Mucosa of descending colon (tissue), 3 donors: ENCODE measurements at regions of chr18 and their contacts with region 1.

Region 1: GRCh38 chr18:74652392-74652988 is 54.8 kb downstream of the ZNF407 start:
- DNase-seq: peak in 1 of 3 donors; percentile 18
- ATAC-seq: no peak
- H3K4me3 ChIP-seq: no peak overlapping the region
- H3K4me1 ChIP-seq: no peaks in the 10 kb centered on the region
- CTCF ChIP-seq: no peak

Region 2: DNA sequence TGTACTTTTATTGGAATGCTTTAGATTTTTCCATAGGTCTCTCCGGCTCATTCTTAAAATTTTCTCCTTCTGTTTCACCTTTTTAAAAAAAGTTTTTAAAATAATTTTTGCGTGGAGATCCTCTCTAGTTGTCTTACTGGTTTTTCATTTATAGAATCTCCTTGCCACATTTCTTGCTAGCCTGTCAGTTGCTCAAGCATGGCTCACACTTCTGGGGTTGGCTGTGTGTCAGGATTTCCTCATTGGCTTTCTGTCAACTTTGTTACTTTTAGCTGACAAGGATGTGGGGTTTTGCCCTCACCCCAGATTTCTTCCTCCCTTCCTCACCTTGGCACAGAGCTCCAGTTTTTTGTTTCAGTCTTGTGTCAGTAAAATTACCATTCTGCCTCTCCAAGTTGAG is 69.7 kb after region 1 on chr18:
- intact Hi-C with region 1: no loop called
- DNase-seq: no peak
- ATAC-seq: no peak
- H3K4me3 ChIP-seq: no peak overlapping the region
- H3K4me1 ChIP-seq: no peaks in the 10 kb centered on the region
- CTCF ChIP-seq: no peak

Region 3: GRCh38 chr18:75478996-75479880 is 826.7 kb after region 1 on chr18:
- intact Hi-C with region 1: loop called in 1 of 2 experiments (anchors 5 kb)
- DNase-seq: peak in 1 of 3 donors; percentile 21
- ATAC-seq: peak; percentile 64
- H3K4me3 ChIP-seq: no peak overlapping the region
- H3K4me1 ChIP-seq: no peaks in the 10 kb centered on the region
- CTCF ChIP-seq: no peak